Activated CD4-positive, alpha-beta memory T cell treated with anti-CD3 and anti-CD28 coated beads, Interleukin-2, amount 10 ng/mL, durations not matched to agents 7 days and 5 days (primary cell): ENCODE measurements at regions of chr6 and their contacts with region 1.

Region 1: GRCh38 chr6:148947621-148948444 is 201.0 kb downstream of the UST start:
- DNase-seq: peak; percentile 77
- H3K4me3 Mint-ChIP-seq: no peak overlapping the region
- H3K27ac Mint-ChIP-seq: no peak overlapping the region
- H3K4me1 Mint-ChIP-seq: no peaks in the 10 kb centered on the region
- H3K27me3 Mint-ChIP-seq: peaks cover 2% of the 10 kb centered on the region

Region 2: DNA sequence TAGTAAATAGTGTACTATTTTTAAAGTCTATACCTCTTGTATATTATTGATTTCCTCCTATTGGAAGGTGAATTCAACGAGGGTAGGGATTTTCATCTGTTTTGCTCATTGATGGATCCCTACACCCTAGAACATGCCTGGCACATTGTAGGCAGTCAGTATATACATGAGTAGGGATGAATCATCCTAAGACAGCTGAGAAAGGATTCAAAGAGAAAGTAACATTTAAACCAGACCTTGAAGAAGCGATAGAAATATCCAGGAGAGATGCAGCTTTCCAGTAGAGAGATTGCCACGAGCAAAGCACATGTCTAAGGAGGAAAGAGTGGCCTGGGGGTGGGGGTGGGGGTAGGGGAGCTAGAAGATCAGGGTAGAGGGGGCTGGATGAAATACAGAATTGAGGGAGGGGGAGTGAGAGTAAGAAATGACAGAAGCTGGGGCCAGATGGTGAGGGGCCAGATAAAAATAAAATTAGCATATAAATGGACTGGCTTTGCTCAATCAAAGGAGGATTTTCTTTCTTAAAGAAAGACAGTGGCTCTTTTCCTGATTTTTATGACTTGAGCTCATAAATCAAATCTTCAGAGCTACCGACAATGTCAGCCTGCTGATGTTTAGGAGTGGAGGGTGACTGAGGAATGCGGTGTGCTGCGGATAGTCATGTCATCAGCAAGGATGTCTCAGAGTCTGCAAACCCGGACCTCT is 1271.2 kb before region 1 on chr6:
- CTCF ChIA-PET with region 1: no interaction called
- POLR2A ChIA-PET with region 1: no interaction called
- DNase-seq: no peak
- H3K4me3 Mint-ChIP-seq: no peak overlapping the region
- H3K27ac Mint-ChIP-seq: no peak overlapping the region
- H3K4me1 Mint-ChIP-seq: no peaks in the 10 kb centered on the region
- H3K27me3 Mint-ChIP-seq: no peaks in the 10 kb centered on the region

Region 3: GRCh38 chr6:148559848-148560433 is 387.9 kb before region 1 on chr6:
- CTCF ChIA-PET with region 1: interaction called, 12 read pairs
- POLR2A ChIA-PET with region 1: no interaction called
- DNase-seq: peak; percentile 70
- H3K4me3 Mint-ChIP-seq: no peak overlapping the region
- H3K27ac Mint-ChIP-seq: no peak overlapping the region
- H3K4me1 Mint-ChIP-seq: peaks cover 16% of the 10 kb centered on the region
- H3K27me3 Mint-ChIP-seq: peaks cover 31% of the 10 kb centered on the region

Region 4: GRCh38 chr6:148578245-148578732 is 369.5 kb before region 1 on chr6:
- CTCF ChIA-PET with region 1: interaction called, 20 read pairs
- POLR2A ChIA-PET with region 1: no interaction called
- DNase-seq: peak; percentile 53
- H3K4me3 Mint-ChIP-seq: no peak overlapping the region
- H3K27ac Mint-ChIP-seq: no peak overlapping the region
- H3K4me1 Mint-ChIP-seq: peaks cover 3% of the 10 kb centered on the region
- H3K27me3 Mint-ChIP-seq: peaks cover 22% of the 10 kb centered on the region

Region 5: DNA sequence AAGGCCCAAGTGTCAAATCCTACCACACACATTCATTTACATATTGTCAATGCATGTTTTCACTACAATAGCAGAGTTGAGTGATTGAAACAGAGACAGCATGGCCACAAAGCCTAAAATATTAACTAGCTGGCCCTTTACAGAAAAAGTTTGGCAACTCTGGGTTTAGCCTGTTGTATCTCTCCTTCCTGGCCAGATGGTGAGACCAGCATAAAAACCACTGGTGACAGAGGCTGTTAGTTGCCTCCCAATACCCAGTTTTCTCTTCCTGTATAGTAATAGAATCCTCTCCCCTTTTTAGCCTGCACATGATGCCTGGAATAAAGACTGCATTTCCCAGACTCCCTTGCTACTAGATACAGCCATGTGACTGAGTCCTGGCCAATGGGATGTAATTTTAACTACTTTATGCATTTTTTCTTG is 269.6 kb after region 1 on chr6:
- CTCF ChIA-PET with region 1: no interaction called
- POLR2A ChIA-PET with region 1: no interaction called
- DNase-seq: no peak
- H3K4me3 Mint-ChIP-seq: no peak overlapping the region
- H3K27ac Mint-ChIP-seq: no peak overlapping the region
- H3K4me1 Mint-ChIP-seq: peaks cover 39% of the 10 kb centered on the region
- H3K27me3 Mint-ChIP-seq: no peaks in the 10 kb centered on the region